HAP-1 (cell line): ENCODE measurements at regions of chr5 and their contacts with region 1.

Region 1: DNA sequence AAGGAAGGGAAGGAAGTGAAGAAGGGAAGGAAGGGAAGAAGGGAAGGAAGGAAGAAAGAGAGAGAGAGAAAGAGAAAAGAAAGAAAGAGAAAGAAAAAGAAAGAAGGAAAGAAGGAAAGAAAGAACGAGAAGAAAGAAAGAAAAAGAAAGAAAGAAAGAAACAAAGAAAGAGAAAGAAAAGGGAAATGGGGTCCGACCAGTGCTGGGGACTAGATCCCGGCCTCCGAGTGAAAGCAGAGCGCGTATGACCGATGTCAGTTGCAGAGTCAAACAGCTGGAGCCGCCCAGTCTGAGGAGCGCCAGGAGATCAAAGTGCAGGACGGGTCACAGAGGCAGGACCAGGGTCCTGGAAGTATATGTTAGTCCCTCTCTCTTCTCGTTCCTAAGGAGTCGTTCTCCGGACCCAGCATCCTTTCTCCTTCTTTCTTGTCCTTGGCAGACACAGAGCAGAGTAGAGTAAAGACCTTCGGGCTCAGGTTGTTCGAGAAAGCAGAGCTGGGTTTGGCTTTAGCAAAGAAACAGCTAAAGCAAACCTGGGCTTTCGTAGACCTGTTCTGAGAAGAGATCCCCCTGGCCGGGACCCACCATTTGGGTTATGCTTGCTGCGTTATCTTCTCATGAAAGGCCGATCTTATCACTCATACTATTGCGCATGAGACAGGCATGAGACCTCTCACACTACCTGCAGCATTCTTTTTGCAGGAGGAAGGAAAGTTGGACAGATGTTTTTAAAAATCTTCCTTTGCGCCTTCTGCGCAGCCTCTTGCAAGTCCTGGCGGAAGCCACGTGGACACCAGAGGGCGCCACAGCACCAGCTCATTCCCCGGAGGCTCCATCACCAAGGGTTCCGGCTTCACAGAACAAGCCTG is 305.2 kb upstream of the MSX2 start:
- DNase-seq: peak; percentile 71 to 93
- H3K4me3 ChIP-seq: no peak overlapping the region
- H3K4me1 ChIP-seq: no peaks in the 10 kb centered on the region
- H3K27me3 ChIP-seq: peaks cover 10% of the 10 kb centered on the region; the same call in 1 of the 2 replicates

Region 2: DNA sequence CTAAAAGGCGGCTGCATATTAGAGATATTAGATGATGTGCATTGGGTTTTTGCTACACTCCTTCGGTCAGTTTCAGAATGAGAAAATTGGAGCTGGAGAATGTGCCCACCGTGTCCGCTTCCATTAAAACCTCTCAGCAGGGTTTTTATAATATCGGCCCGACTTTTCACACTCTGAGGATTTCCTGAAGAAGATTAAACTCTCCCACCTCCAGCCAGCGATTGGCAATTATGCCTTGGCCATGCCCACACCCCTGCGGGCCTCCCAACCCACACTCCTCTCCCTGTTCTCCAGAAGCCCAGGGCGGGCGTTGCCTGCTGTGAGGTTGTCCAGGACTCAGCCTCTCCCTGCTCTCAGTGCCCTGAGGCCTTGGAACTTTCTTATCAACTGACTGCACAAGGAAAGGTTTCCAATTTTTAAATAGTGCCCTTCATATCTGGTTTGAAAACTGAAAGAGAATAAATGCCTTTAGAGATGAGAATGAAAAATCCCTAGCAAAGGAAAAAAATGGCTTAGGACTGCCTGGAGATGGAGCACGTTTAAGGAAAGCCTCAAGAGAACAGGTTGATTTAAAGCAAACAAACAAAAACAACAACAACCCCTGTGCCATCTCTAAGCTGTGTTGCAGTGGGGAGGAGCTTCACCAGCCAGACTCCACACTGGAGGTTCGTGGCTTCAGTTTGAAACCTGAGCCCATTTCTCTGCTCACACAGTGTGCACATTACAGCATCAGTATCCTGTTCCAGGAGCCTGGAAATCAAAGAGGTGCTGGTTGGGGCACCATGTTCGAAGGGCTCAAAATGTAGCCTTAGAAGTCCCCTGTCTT is 80.8 kb before region 1 on chr5:
- in situ Hi-C with region 1: no loop called
- DNase-seq: no peak
- H3K4me3 ChIP-seq: no peak overlapping the region
- H3K4me1 ChIP-seq: no peaks in the 10 kb centered on the region
- H3K27me3 ChIP-seq: peaks cover 16% of the 10 kb centered on the region; the same call in 1 of the 2 replicates

Region 3: DNA sequence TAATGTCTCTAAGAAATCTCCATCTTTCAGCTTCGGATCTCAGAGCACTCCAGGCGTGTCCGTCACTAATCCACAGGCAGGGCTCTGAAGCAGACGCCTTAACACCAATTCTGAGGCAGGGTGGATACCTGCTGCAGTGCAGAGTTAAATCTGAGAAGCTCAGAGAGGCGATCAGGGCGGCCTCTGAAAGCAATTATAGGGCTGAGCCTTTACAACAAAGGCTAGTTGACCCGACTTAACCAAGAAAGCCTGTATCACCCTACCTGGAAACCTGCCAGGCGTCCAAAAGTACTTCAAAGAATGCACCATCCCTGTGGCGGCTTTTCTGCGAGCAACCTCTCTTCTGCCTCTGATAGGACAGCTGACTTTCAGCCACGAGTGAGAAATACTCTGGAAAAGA is 170.4 kb after region 1 on chr5:
- in situ Hi-C with region 1: no loop called
- DNase-seq: peak; percentile 51 to 80
- H3K4me3 ChIP-seq: no peak overlapping the region
- H3K4me1 ChIP-seq: peaks cover 9% of the 10 kb centered on the region
- H3K27me3 ChIP-seq: no peaks in the 10 kb centered on the region

Region 4: GRCh38 chr5:174735498-174736330 is 316.6 kb after region 1 on chr5:
- in situ Hi-C with region 1: loop called (anchors 5 kb)
- DNase-seq: peak in 1 of 2 experiments; percentile 72
- H3K4me3 ChIP-seq: peak overlapping the region; percentile 19
- H3K4me1 ChIP-seq: peaks cover 4% of the 10 kb centered on the region; the same call in 1 of the 2 replicates
- H3K27me3 ChIP-seq: no peaks in the 10 kb centered on the region

Region 5: GRCh38 chr5:174799121-174799520 is 380.0 kb after region 1 on chr5:
- in situ Hi-C with region 1: loop called (anchors 5 kb)
- DNase-seq: no peak
- H3K4me3 ChIP-seq: no peak overlapping the region
- H3K4me1 ChIP-seq: no peaks in the 10 kb centered on the region
- H3K27me3 ChIP-seq: peaks cover 34% of the 10 kb centered on the region

Region 6: GRCh38 chr5:174935854-174936474 is 516.8 kb after region 1 on chr5:
- in situ Hi-C with region 1: loop called (anchors 25 kb)
- DNase-seq: peak; percentile 30 to 79
- H3K4me3 ChIP-seq: no peak overlapping the region
- H3K4me1 ChIP-seq: no peaks in the 10 kb centered on the region
- H3K27me3 ChIP-seq: no peaks in the 10 kb centered on the region

Region 7: GRCh38 chr5:175045820-175046219 is 626.7 kb after region 1 on chr5:
- in situ Hi-C with region 1: no loop called
- DNase-seq: no peak
- H3K4me3 ChIP-seq: no peak overlapping the region
- H3K4me1 ChIP-seq: no peaks in the 10 kb centered on the region
- H3K27me3 ChIP-seq: no peaks in the 10 kb centered on the region